Mammary epithelial cell (primary cell): ENCODE measurements at regions of chr18 and their contacts with region 1.

Region 1: GRCh38 chr18:59085797-59086196 is 53.9 kb upstream of the SEC11C start:
- DNase-seq: no peak
- H3K4me3 ChIP-seq: no peak overlapping the region
- H3K27ac ChIP-seq: no peak overlapping the region
- H3K4me1 ChIP-seq: no peaks in the 10 kb centered on the region
- H3K27me3 ChIP-seq: no peaks in the 10 kb centered on the region
- CTCF ChIP-seq: no peak

Region 2: DNA sequence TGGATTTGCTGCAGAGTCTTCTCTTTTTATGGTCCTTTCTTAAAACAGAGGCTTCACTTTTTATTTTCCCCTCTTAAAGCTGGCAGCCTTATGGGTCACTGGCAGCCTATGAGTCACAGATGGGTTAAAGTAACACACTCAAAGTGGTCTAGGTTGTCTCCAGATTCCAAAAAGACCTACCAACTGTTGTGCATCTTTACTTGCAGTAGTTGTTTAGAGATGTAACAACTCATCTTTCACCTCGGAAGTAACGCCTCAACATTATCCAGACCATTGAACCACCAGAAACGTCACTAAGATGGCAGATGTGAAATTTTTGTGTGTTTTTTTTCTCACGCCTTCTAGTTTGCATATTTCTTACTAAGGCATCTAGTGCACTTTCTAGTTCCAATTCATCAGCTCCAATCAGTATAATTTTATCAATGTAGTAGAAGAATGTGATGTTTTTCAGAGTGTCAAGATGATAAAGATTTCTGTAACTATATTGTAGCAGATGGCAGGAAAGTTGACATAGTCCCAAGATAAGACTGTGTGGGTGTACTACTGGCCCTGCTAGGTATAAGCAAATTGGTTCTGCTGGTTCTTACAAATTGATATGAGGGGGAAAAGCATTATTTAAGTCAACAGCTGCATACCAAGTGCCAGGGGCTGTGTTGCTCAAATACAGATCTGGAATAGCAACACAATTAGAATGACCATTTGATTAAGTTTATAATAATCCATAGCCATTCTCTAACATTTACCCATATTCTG is 44.3 kb after region 1 on chr18:
- CTCF ChIA-PET with region 1: no interaction called
- dilution Hi-C with region 1: loop called (anchors 5 kb)
- in situ Hi-C with region 1: no loop called
- intact Hi-C with region 1: no loop called
- DNase-seq: no peak
- H3K4me3 ChIP-seq: no peak overlapping the region
- H3K27ac ChIP-seq: no peak overlapping the region
- H3K4me1 ChIP-seq: no peaks in the 10 kb centered on the region
- H3K27me3 ChIP-seq: peaks cover under 1% of the 10 kb centered on the region
- CTCF ChIP-seq: no peak

Region 3: GRCh38 chr18:59139371-59140298 is 53.8 kb after region 1 on chr18 and contains the start of gene SEC11C:
- CTCF ChIA-PET with region 1: no interaction called
- dilution Hi-C with region 1: loop called (anchors 5 kb)
- in situ Hi-C with region 1: no loop called
- intact Hi-C with region 1: loop called (anchors 2 kb)
- DNase-seq: peak; percentile 96
- H3K4me3 ChIP-seq: peak within 1 kb of the TSS; percentile 82 to 88 (median 85)
- H3K27ac ChIP-seq: peak within 1 kb of the TSS; percentile 96
- H3K4me1 ChIP-seq: peaks cover 6% of the 10 kb centered on the region
- H3K27me3 ChIP-seq: peaks cover 5% of the 10 kb centered on the region
- CTCF ChIP-seq: no peak
- total RNA-seq, gene SEC11C: 13.7 to 47.1 TPM

Region 4: DNA sequence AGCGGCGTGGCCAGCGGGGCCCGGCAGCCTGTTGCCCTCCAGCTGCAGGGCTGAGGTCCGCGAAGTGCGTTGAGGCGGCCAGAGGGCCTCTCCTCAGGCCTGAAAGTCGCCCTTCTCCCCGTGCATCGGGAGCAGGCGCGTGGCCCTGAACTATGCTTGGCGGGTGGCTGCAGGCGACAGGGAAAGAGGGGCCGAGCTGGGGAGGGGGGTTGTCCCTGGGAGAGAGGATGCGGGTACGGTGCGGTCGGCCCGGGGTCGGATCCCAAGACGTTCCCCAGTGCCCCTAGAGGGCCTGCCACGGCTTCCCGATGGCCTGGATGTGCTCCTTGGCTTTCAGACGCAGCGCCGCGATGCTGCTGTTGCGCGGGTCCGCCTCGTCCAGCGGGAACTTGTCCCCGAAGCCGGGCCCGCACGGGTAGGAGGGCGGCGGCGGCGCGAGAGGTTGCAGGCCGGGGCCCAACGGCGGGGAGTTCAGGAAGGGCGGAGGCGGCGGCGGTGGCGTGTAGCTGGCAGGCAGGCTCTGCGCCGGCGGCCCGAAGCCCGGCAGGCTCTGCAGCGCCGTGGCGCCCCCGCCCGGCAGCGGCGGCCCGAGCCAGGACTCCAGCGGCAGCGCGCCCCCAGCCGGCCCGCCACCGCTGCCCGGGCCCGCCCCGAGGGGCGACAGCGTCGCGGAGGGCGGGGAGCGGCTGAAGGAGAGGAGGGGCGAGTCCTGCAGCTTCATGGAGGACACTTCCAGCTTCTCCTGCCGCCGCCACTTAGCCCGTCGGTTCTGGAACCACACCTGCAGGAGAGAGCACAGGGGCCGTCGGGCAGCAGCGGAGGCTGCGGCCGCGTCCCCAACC is 183.1 kb after region 1 on chr18:
- CTCF ChIA-PET with region 1: interaction called, 11 read pairs
- dilution Hi-C with region 1: no loop called
- in situ Hi-C with region 1: no loop called
- intact Hi-C with region 1: no loop called
- DNase-seq: no peak
- H3K4me3 ChIP-seq: peak overlapping the region in 2 of 3 experiments; percentile 29 to 30
- H3K27ac ChIP-seq: no peak overlapping the region
- H3K4me1 ChIP-seq: peaks cover 44% of the 10 kb centered on the region
- H3K27me3 ChIP-seq: peaks cover 96% of the 10 kb centered on the region
- CTCF ChIP-seq: peak in 1 of 2 donors; percentile 10